ENCODE measurements at regions of chr9 and their contacts with region 1.

Region 1: DNA sequence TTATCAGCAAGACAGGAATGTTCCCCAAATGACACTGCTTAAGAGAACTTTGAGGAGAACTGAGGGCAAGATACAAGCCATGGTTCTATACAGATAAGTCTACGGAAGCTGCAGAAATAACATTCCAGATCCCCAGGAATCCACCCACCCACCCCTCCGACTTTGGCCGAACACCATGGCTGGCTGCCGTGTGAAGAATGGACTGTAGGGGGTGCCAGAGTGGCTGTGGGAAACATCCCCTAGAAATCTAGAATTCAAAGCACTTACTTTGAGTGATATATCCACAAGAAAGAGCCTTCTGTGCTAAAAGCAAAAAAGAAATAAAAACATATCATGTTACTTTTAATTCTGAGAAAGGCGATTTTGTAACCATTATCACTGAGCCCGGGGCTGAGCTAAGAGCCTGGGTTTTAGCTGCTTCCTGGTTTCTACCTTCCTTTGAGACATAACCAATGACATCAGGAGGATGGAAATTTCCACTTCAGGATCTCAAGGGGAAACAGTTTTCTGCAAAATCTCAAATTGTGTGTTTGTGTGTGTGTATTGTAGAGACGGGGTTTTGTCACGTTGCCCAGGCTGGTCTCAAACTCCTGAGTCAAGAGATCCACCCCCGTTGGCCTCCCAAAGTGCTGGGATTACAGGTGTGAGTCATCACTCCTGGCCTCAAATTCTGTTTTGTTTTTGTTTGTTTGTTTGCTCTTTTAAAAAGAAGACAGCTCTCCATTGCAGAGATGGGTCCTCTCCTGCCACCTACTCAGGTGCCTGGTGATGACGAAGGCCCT is 36.4 kb downstream of the GGTA1 start:
- DNase-seq: peak in 1 of 2 donors; percentile 81
- H3K4me3 ChIP-seq: no peak overlapping the region
- H3K27ac ChIP-seq: peak overlapping the region; percentile 21 to 47
- H3K4me1 ChIP-seq: peaks cover 6 to 14% of the 10 kb centered on the region in 2 donors
- H3K27me3 ChIP-seq: no peaks in the 10 kb centered on the region
- CTCF ChIP-seq: peak; percentile 72 to 93 (median 88)

Region 2: GRCh38 chr9:121213136-121213806 is 249.9 kb before region 1 on chr9:
- intact Hi-C with region 1: no loop called
- DNase-seq: peak; percentile 53 to 96
- H3K4me3 ChIP-seq: peak overlapping the region in 1 of 2 donors; percentile 23
- H3K27ac ChIP-seq: peak overlapping the region; percentile 32 to 54
- H3K4me1 ChIP-seq: no peaks in the 10 kb centered on the region
- H3K27me3 ChIP-seq: no peaks in the 10 kb centered on the region
- CTCF ChIP-seq: peak; percentile 91 to 96 (median 94)

Region 3: GRCh38 chr9:121286973-121287741 is 176.1 kb before region 1 on chr9:
- intact Hi-C with region 1: no loop called
- DNase-seq: peak; percentile 56 to 95
- H3K4me3 ChIP-seq: peak overlapping the region; percentile 24 to 38
- H3K27ac ChIP-seq: peak overlapping the region; percentile 98 to 99
- H3K4me1 ChIP-seq: peaks cover 66 to 91% of the 10 kb centered on the region in 2 donors
- H3K27me3 ChIP-seq: no peaks in the 10 kb centered on the region
- CTCF ChIP-seq: peak in 2 of 3 experiments; percentile 28 to 29

Region 4: GRCh38 chr9:121538246-121538645 is 75.0 kb after region 1 on chr9:
- intact Hi-C with region 1: loop called (anchors 5 kb)
- DNase-seq: no peak
- H3K4me3 ChIP-seq: no peak overlapping the region
- H3K27ac ChIP-seq: no peak overlapping the region
- H3K4me1 ChIP-seq: peaks cover 0 to 7% of the 10 kb centered on the region in 2 donors
- H3K27me3 ChIP-seq: no peaks in the 10 kb centered on the region
- CTCF ChIP-seq: peak in 1 of 3 experiments; percentile 20